ENCODE measurements at regions of chr12 and their contacts with region 1.

Region 1: DNA sequence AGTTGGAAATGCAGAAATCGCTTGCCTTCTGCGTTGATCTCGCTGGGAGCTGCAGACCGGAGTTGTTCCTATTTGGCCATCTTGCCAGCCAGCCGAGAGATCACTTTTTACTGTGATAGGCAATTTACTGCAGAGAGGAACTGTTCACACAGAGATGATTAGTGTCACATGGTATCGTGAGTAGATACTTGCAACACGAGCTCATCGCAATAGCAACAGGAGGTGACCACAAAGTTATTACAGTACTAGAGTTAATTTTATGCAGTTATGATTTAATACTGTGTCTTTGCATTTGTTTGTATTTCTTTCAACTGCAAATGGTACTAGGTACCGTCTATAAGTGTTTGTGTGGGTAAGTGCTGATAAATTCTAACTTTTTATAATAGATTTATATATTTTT is 27.8 kb downstream of the NOPCHAP1 start:
- DNase-seq: no peak
- H3K4me3 ChIP-seq: no peak overlapping the region
- H3K27ac ChIP-seq: no peak overlapping the region
- H3K4me1 ChIP-seq: no peaks in the 10 kb centered on the region
- H3K27me3 ChIP-seq: no peaks in the 10 kb centered on the region
- CTCF ChIP-seq: no peak

Region 2: GRCh38 chr12:104974616-104975290 is 39.1 kb before region 1 on chr12:
- CTCF ChIA-PET with region 1: no interaction called
- POLR2A ChIA-PET with region 1: no interaction called
- intact Hi-C with region 1: loop called (anchors 1 kb)
- DNase-seq: peak; percentile 44 to 87
- H3K4me3 ChIP-seq: no peak overlapping the region
- H3K27ac ChIP-seq: peak overlapping the region; percentile 83
- H3K4me1 ChIP-seq: peaks cover 32% of the 10 kb centered on the region
- H3K27me3 ChIP-seq: no peaks in the 10 kb centered on the region
- CTCF ChIP-seq: no peak